Heart right ventricle (tissue), 16 donors: ENCODE measurements at regions of chr3 and their contacts with region 1.

Region 1: GRCh38 chr3:193261970-193262369 is 20.9 kb downstream of the PLAAT1 start:
- DNase-seq: no peak
- ATAC-seq: peak in 5 of 8 donors; percentile 28 to 82 (median 59)
- H3K4me3 ChIP-seq: no peak overlapping the region
- H3K27ac ChIP-seq: no peak overlapping the region
- H3K4me1 ChIP-seq: no peaks in the 10 kb centered on the region
- H3K27me3 ChIP-seq: no peaks in the 10 kb centered on the region
- CTCF ChIP-seq: no peak

Region 2: GRCh38 chr3:193214445-193214844 is 47.5 kb before region 1 on chr3:
- intact Hi-C with region 1: loop called in 1 of 10 experiments (anchors 2 kb)
- DNase-seq: no peak
- ATAC-seq: no peak
- H3K4me3 ChIP-seq: no peak overlapping the region
- H3K27ac ChIP-seq: no peak overlapping the region
- H3K4me1 ChIP-seq: no peaks in the 10 kb centered on the region
- H3K27me3 ChIP-seq: peaks cover 0 to 24% (median 0%) of the 10 kb centered on the region in 7 donors
- CTCF ChIP-seq: no peak